Gastrocnemius medialis (tissue), 4 donors: ENCODE measurements at regions of chr3 and their contacts with region 1.

Region 1: DNA sequence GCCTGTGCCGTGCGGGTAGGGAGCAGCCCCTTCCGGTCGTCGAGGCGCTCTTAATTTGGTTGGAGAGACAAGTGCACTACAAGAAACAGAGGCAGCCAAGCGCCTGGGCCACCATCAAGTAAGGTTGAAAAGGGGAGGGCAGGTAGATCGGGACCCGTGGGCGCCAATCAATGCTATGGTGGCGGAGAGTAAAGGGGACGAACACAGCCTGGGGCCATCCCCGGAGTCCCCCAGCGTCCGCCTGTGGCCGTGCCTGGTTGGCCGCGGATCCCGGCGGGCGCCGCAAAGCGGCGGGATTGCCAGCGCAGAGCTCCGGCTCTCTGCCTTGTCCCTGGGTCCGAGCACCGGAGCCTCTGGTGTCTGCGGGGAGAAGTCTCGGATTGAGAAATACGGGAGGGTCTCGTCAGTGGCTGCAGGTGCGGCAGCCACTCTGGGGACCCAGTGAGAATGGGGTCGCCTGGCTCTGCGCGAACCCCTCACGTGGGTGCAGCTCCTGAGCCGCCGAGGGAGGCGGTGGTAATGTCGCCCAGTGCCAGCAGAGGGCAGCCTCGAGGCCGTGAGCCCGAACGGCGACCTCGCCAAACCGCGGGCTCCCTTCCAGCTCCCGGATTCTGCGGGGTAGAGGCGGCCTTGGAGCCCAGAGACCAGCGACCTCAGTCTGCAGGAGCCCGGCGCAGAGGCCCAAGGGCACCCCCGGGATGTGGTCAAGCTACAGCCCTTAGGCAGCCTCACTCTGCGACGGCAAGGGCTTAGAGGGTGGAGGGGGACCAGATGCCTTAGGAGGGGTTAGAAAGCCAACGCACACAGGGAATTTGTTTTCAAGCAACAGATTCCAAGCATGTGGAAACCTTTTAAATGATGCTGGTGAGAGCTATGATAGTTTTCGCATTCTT is 10.8 kb downstream of the FOXL2 start:
- DNase-seq: peak; percentile 34 to 55
- ATAC-seq: peak; percentile 67 to 68
- H3K4me3 ChIP-seq: peak overlapping the region; percentile 32 to 70 (median 44)
- H3K27ac ChIP-seq: no peak overlapping the region
- H3K4me1 ChIP-seq: peaks cover 28 to 34% of the 10 kb centered on the region in 2 donors
- H3K27me3 ChIP-seq: peaks cover 50 to 56% (median 51%) of the 10 kb centered on the region in 3 donors
- CTCF ChIP-seq: peak; percentile 59 to 95 (median 88)
- POLR2A ChIP-seq: no peak

Region 2: GRCh38 chr3:139343895-139344856 is 408.1 kb after region 1 on chr3 and contains the start of gene MRPS22:
- in situ Hi-C with region 1: loop called in 3 of 4 experiments (anchors 10 to 25 kb)
- intact Hi-C with region 1: no loop called
- DNase-seq: peak; percentile 74 to 78
- ATAC-seq: peak; percentile 98 to 99
- H3K4me3 ChIP-seq: peak within 1 kb of the TSS; percentile 70 to 99 (median 90)
- H3K27ac ChIP-seq: peak within 1 kb of the TSS; percentile 86 to 93 (median 86)
- H3K4me1 ChIP-seq: peaks cover 19% of the 10 kb centered on the region in 2 donors
- H3K27me3 ChIP-seq: no peaks in the 10 kb centered on the region
- CTCF ChIP-seq: no peak
- POLR2A ChIP-seq: peak in 1 of 2 donors; percentile 31
- total RNA-seq, gene MRPS22: 96.4 to 140 (median 116) TPM